Dorsolateral prefrontal cortex (tissue), 120 donors: ENCODE measurements at regions of chr5 and their contacts with region 1.

Region 1: GRCh38 chr5:160119142-160119904 is at the start of gene PWWP2A:
- DNase-seq: peak; percentile 95 to 100 (median 99)
- H3K4me3 ChIP-seq: peak within 1 kb of the TSS; percentile 55 to 99 (median 95)
- H3K27ac ChIP-seq: peak within 1 kb of the TSS; percentile 90 to 100 (median 99)
- H3K27me3 ChIP-seq: no peaks in the 10 kb centered on the region
- CTCF ChIP-seq: peak in 27 of 56 donors; percentile 3 to 44 (median 19)
- total RNA-seq, gene PWWP2A: 24.0 to 72.7 (median 40.0) TPM

Region 2: GRCh38 chr5:159878988-159879471 is 240.3 kb before region 1 on chr5:
- intact Hi-C with region 1: no loop called
- DNase-seq: peak; percentile 27 to 86 (median 68)
- H3K4me3 ChIP-seq: peak overlapping the region in 11 of 59 donors; percentile 9 to 43 (median 25)
- H3K27ac ChIP-seq: peak overlapping the region in 48 of 59 donors; percentile 5 to 81 (median 58)
- H3K27me3 ChIP-seq: no peaks in the 10 kb centered on the region
- CTCF ChIP-seq: no peak

Region 3: DNA sequence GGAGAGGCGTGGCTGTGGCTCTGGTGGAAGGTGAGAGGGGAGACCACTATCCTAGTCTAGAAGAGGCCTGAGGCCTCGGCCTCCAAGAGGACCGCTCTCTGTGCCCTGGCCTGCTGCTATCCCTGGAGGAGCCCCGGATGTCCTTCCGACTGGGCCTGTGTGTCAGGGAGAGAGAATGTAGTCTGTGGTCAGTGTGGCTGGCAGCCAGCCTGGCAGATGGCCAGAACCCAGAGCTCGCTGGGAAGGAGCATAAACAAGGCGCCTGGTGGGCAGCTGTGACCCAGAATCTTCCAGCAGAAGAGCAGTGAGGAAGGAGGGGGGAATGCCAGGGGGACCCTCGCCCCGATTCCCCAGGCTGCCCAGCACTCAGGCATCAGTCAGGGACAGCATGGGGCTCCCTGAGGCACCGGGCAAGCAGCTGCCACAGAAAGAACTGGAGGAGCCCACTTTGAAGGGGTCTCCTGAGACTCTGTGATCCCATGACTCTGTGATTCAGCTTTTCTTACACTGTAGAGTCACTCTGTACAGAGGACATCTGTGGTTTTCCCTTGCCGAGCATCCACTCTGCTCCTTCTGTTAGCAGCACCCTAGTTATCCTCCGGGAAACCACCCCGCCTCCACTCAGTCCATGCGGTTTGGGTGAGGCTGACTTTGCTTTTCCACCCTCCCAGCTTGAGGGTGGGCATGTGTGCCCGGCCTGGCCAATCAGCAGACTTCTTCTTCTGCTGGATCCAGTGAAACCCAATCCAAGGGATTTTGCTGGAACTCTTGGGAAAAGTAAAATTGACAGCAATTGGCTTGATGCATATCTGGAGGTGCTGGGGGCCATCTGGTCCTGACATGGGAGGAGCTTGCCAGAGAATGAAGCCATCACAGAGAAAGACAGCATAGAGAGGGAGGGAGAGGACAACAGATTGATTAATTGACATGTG is 46.1 kb after region 1 on chr5:
- intact Hi-C with region 1: loop called (anchors 1 to 2 kb)
- DNase-seq: peak; percentile 83 to 91 (median 88)
- H3K4me3 ChIP-seq: peak overlapping the region in 53 of 59 donors; percentile 3 to 59 (median 43)
- H3K27ac ChIP-seq: peak overlapping the region; percentile 76 to 99 (median 97)
- H3K27me3 ChIP-seq: no peaks in the 10 kb centered on the region
- CTCF ChIP-seq: peak in 5 of 56 donors; percentile 2 to 19 (median 12)

Region 4: DNA sequence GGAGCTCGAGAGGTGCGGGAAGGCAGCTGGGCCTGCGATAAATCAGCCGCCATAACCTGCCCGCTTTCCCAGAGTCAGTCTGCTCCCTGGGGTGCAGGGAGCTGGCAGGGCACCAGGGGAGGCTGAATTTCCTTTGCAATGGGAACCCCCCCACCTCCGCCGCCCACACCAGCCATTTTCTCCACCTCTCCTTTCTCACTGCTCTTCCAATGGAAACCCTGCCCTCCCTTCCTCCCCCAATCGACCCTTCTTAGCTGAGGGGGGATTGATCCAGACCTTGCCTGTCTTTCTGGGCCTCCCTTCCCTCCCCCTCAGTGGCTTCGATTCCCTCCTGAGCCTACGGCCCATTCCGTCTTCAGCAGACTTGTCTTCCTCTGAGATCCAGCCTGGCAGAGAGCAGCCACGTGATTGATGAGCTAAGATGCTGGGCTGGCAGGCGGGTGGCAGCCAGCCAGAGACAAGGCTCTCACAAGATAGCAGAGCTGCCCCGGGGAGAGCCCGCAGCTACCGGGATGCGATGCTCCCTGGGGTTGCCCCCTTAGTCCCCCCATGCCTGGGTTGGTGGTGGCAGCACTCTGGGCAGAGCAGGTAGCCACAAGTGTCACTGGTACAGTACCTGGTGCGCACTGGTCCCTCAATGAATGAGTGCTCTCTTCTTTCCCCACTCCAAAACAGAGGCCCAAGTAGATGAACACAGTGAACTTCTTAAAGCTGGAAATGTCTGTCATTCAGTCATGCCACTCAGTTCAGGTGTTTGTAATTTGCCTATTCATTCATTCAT is 56.3 kb after region 1 on chr5:
- intact Hi-C with region 1: loop called in 1 of 2 experiments (anchors 2 kb)
- DNase-seq: peak; percentile 77 to 90 (median 88)
- H3K4me3 ChIP-seq: peak overlapping the region; percentile 16 to 65 (median 42)
- H3K27ac ChIP-seq: peak overlapping the region in 57 of 59 donors; percentile 4 to 90 (median 76)
- H3K27me3 ChIP-seq: no peaks in the 10 kb centered on the region
- CTCF ChIP-seq: peak in 3 of 56 donors; percentile 4 to 34 (median 16)

Region 5: DNA sequence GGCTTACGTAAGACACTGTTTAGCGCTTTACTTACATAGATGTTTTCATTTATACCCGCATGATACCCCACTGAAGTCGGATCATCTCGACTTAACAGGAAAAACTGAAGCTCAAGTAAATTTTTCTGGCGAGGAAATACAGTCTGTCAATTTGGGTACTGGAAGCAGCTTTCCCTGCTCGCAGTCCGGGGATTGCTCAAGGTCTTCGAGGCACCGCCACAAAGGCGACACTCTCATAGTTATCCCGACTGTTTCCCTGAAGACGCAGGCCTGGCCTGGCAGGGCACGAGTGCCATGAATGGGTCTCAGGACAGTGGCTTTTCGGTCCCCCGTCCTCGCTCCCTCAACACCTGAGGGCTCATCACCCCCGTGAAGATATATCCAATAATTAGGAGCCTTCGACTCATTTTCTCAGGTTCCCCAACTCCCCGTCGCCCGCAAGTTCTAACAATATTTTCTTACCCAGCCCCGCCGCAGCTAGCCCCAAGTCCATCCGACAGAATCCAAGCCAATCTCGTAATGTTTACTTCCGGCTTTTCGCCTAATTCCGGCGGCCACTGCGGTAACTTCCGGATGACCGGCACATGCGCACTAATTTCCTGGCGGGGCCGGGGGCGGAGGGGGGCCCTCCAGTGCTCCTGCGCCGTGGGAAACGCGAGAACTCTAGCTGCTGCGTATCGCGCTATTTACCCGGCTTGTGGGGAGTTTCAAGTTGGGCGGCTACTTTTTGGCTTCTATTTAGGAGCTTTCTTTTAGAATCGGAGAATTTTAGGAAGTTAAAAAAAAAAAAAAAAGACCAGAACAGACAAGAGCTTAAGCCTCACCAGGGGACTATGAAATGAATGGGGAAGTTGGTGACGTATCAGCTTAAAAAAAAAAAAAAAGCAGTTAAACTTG is 299.5 kb after region 1 on chr5 and contains the start of gene SLU7:
- intact Hi-C with region 1: no loop called
- DNase-seq: peak; percentile 81 to 91 (median 88)
- H3K4me3 ChIP-seq: peak within 1 kb of the TSS; percentile 67 to 100 (median 90)
- H3K27ac ChIP-seq: peak within 1 kb of the TSS; percentile 33 to 97 (median 91)
- H3K27me3 ChIP-seq: no peaks in the 10 kb centered on the region
- CTCF ChIP-seq: peak in 24 of 56 donors; percentile 3 to 62 (median 22)
- total RNA-seq, gene SLU7: 41.4 to 128 (median 79.4) TPM